A673 (cell line): ENCODE measurements at regions of chr12 and their contacts with region 1.

Region 1: DNA sequence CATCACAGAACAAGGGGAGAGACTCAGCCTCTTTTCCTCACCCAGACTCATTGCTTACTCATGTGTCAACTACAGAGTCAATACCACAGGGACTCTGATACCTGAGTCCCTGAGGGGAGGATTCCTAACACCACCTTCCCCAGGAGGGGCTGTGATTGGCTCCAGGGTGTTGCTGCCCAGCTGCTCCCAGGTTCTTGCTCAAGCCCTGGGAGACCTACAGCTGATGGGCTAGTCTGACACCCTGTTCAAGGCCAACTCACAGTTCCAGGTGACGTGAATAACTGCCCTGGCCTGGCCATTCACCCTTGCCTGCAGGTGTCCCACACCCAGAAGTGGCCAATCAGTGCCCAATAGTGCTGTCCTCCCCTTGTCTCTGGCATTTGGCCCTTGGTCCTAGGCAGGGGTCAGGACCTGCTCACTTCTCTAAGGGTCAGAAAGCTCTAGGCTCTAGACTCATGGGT is 8.6 kb downstream of the SPRYD4 start:
- DNase-seq: no peak
- H3K4me3 ChIP-seq: no peak overlapping the region
- H3K27ac ChIP-seq: no peak overlapping the region
- H3K4me1 ChIP-seq: no peaks in the 10 kb centered on the region
- H3K27me3 ChIP-seq: no peaks in the 10 kb centered on the region
- CTCF ChIP-seq: no peak

Region 2: GRCh38 chr12:56271031-56271430 is 206.0 kb before region 1 on chr12:
- CTCF ChIA-PET with region 1: interaction called, 14 read pairs
- POLR2A ChIA-PET with region 1: no interaction called
- intact Hi-C with region 1: no loop called
- DNase-seq: peak; percentile 45
- H3K4me3 ChIP-seq: no peak overlapping the region
- H3K27ac ChIP-seq: no peak overlapping the region
- H3K4me1 ChIP-seq: peaks cover 3% of the 10 kb centered on the region
- H3K27me3 ChIP-seq: no peaks in the 10 kb centered on the region
- CTCF ChIP-seq: peak; percentile 57

Region 3: GRCh38 chr12:56450241-56450640 is 26.8 kb before region 1 on chr12:
- CTCF ChIA-PET with region 1: no interaction called
- POLR2A ChIA-PET with region 1: interaction called, 15 read pairs
- intact Hi-C with region 1: no loop called
- DNase-seq: no peak
- H3K4me3 ChIP-seq: no peak overlapping the region
- H3K27ac ChIP-seq: no peak overlapping the region
- H3K4me1 ChIP-seq: peaks cover 8% of the 10 kb centered on the region
- H3K27me3 ChIP-seq: no peaks in the 10 kb centered on the region
- CTCF ChIP-seq: no peak

Region 4: GRCh38 chr12:57416039-57416996 is 939.3 kb after region 1 on chr12:
- CTCF ChIA-PET with region 1: no interaction called
- POLR2A ChIA-PET with region 1: no interaction called
- intact Hi-C with region 1: no loop called
- DNase-seq: no peak
- H3K4me3 ChIP-seq: no peak overlapping the region
- H3K27ac ChIP-seq: no peak overlapping the region
- H3K4me1 ChIP-seq: no peaks in the 10 kb centered on the region
- H3K27me3 ChIP-seq: no peaks in the 10 kb centered on the region
- CTCF ChIP-seq: no peak